Activated B cell treated with CpG ODN at 0.5 μM for 24 hours (primary cell): ENCODE measurements at regions of chr13 and their contacts with region 1.

Region 1: DNA sequence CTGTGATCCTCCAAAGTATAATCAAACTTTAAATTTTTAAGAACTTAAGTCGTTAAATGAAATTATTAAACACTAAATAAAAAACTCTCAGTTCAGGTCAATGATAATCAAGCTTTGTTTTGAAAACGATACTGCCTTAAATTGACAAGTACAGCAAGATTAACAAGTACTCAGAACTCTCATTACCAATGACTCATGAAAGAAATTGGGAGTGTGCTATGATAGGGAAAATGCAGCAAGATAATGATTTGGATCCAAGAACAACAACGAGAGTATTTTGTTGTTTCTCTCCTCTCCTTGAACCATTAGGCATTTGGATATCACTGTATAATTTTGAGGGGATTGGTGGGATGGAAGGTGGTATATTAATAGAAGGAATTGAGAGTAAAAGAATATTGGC is 10.2 kb downstream of the N4BP2L2 start:
- DNase-seq: no peak
- ATAC-seq: no peak
- H3K4me3 Mint-ChIP-seq: no peak overlapping the region
- H3K27ac Mint-ChIP-seq: no peak overlapping the region
- H3K4me1 Mint-ChIP-seq: peaks cover 49% of the 10 kb centered on the region
- H3K27me3 Mint-ChIP-seq: no peaks in the 10 kb centered on the region
- CTCF ChIP-seq: no peak

Region 2: DNA sequence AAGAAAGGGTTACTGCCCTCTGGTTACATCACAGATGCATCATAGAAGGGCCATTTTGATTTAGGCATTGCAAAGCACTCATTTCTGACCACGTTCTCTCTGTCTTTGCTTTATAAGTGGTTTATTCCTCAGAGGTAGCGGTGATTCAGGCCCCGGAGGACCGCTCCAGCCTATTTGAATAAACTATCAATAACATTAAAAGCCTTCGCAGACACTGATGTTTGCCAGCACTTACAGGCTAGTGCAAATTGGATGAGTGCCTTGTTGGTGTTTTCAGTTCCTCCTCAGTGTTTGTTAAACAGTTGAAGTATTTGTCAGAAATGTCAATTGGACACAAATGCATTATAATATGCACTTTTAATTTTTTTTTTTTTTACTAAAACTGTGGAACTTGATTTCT is 668.8 kb before region 1 on chr13:
- CTCF ChIA-PET with region 1: no interaction called
- POLR2A ChIA-PET with region 1: no interaction called
- intact Hi-C with region 1: no loop called
- DNase-seq: no peak
- ATAC-seq: peak; percentile 56
- H3K4me3 Mint-ChIP-seq: no peak overlapping the region
- H3K27ac Mint-ChIP-seq: no peak overlapping the region
- H3K4me1 Mint-ChIP-seq: peaks cover 21% of the 10 kb centered on the region
- H3K27me3 Mint-ChIP-seq: peaks cover 10% of the 10 kb centered on the region
- CTCF ChIP-seq: no peak

Region 3: GRCh38 chr13:32476021-32476731 is 52.2 kb before region 1 on chr13:
- CTCF ChIA-PET with region 1: no interaction called
- POLR2A ChIA-PET with region 1: no interaction called
- intact Hi-C with region 1: no loop called
- DNase-seq: no peak
- ATAC-seq: no peak
- H3K4me3 Mint-ChIP-seq: no peak overlapping the region
- H3K27ac Mint-ChIP-seq: no peak overlapping the region
- H3K4me1 Mint-ChIP-seq: no peaks in the 10 kb centered on the region
- H3K27me3 Mint-ChIP-seq: no peaks in the 10 kb centered on the region
- CTCF ChIP-seq: no peak

Region 4: DNA sequence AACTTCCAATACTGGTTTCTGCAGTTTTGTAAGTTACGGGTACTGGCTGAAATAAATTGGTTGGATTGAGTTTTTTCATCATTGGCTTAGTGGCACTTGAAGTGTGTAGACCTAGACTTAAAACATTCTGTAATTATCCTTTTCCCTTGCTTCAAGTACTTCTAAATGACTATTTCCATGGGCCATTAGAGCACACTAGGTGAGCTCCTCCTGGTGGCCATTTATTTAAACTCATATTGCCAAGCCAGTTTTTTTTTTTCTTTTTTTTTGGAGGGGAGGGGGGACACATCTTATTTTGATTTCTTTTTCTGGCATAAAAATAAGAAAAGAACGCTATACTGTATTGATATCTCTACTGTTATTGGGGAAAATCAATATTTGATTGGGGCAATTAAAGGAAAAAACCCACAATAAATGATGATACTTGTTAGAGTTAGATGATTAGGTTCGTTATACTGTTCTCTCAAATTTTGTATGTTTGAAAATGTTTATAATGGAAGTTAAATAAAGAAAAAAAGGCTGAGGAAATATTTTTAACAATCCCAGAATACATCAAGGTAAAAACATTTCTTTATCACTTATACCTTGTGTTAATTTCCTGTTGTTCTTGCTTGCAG is 140.8 kb after region 1 on chr13:
- CTCF ChIA-PET with region 1: no interaction called
- POLR2A ChIA-PET with region 1: no interaction called
- intact Hi-C with region 1: loop called (anchors 10 kb)
- DNase-seq: no peak
- ATAC-seq: no peak
- H3K4me3 Mint-ChIP-seq: no peak overlapping the region
- H3K27ac Mint-ChIP-seq: no peak overlapping the region
- H3K4me1 Mint-ChIP-seq: peaks cover 3% of the 10 kb centered on the region
- H3K27me3 Mint-ChIP-seq: no peaks in the 10 kb centered on the region
- CTCF ChIP-seq: no peak